ENCODE measurements at regions of chr1 and their contacts with region 1.

Region 1: GRCh38 chr1:18723701-18724411 is 93.2 kb downstream of the PAX7 start:
- DNase-seq: no peak

Region 2: DNA sequence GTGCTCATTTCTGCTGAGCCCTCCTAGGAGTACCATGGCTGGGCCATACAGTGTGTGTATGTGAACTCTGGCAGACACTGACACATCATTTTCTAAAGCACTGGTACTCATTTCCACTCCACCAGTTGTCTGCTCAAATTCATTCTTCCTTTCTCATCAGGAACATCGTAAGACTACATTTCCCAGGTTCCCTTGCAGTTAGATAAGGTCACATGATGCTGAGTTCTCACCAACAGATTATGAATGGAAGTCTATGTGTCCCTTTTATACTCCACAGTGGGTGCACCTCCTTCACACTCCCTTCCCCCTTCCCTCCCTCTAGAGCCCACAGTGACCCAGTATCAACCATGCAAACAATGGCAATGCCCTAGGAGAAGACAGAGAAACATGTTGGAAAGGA is 131.5 kb before region 1 on chr1:
- intact Hi-C with region 1: no loop called
- DNase-seq: no peak

Region 3: DNA sequence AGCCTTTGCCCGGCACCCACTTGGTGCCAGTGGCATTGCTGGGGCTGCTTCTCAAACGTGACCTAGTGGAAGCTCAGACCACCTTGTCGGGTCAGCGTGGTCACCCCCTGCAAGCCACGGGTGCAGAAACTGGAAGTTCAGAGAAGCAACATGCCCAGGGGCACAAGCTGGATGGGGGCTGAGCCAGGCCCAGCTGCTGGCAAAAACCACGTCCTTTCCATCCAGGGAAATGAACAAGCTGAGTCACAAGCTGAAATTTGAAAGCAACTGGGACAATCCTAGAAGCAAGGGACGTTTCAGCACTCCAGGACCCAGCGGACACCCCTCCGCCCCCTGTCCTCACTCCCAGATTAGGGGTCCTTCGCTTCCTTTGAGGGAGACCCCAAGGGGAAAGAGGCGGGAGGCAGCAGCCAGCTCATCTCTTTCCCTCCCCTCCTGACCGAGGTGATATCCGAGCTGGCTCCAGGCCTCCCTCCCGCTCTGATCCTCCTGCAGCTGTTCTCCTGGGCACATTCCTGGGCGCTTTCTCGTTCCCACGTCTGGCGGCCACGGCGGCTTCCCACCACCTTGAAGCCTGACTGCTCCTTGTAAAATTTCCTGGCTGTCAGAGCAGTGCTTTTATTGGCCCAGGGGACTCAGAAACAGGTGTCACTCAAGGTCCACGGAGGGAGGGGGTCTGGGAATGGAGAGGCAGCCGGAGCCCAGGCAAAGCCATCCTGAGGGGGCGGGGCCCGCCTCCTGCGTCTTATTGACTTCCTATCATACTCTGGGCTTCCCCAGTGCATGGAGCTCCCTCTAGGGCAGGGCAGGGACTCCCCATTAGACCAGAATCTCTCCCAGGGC is 30.4 kb before region 1 on chr1:
- intact Hi-C with region 1: no loop called
- DNase-seq: no peak

Region 4: DNA sequence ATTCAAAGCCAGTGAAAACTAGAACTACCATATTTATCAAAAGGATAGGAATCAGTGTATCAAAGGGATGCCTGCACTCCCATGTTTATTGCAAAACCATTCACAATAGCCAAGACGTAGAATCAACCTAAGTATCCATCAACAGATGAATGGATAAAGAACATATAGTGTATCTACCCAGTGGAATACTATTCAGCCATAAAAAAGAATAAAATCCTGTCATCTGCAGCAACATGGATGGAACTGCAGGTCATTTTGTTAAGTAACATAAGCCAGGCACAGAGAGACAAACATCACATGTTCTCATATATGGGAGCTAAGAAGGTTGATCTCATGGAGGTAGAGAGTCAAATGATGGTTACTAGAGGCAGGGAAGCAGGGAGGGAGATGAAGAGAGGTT is 16.8 kb after region 1 on chr1:
- intact Hi-C with region 1: loop called in 1 of 2 experiments (anchors 1 kb)
- DNase-seq: no peak

Measured in posterior vena cava (tissue), 2 donors.